Activated CD8-positive, alpha-beta T cell treated with anti-CD3 and anti-CD28 coated beads for 36 hours (primary cell): ENCODE measurements at regions of chr6 and their contacts with region 1.

Region 1: DNA sequence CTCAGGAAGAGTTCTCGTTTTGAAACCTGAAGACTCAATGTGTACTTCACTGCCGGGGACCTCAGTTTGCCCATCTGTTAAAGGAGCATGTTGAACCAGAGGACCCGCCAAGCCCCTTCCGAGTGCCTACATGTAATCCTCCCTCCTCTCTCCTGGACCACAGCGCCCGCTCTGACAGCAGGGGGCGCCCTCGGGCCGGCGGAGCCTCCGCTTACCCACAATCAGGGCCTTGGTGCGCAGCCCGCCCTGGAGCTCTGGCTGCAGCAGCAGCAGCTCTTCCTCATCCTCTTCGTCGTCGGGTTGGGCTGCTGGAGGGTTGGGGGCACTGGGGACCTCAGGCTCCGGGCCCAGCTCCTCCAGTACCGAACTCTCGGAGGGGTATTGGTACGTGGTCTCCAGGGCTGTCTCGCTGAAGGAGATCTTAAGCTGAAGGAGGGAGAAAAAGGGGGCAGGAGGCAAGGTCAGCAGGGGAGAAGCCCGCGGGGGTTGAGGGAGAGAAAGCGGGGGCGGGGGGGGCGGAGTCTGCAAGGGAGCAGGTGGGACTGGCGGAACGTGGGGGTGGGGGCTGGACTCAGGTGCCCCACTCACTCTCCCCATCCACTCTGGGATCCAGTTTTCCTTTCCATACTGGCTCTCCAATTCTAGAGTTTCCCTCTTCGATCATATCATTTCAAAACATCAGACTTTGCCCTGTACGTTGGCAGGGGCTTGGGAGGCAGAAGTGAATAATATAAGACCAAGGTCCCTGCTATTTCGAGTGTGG is 6.3 kb upstream of the DHX16 start:
- DNase-seq: peak; percentile 92
- ATAC-seq: peak; percentile 27
- H3K4me3 Mint-ChIP-seq: peak overlapping the region; percentile 88
- H3K27ac Mint-ChIP-seq: peak overlapping the region; percentile 95
- H3K4me1 Mint-ChIP-seq: peaks cover 11% of the 10 kb centered on the region
- H3K27me3 Mint-ChIP-seq: no peaks in the 10 kb centered on the region
- CTCF ChIP-seq: peak; percentile 97

Region 2: GRCh38 chr6:30700340-30700739 is 21.2 kb after region 1 on chr6:
- CTCF ChIA-PET with region 1: no interaction called
- POLR2A ChIA-PET with region 1: no interaction called
- intact Hi-C with region 1: no loop called
- DNase-seq: no peak
- ATAC-seq: no peak
- H3K4me3 Mint-ChIP-seq: no peak overlapping the region
- H3K27ac Mint-ChIP-seq: no peak overlapping the region
- H3K4me1 Mint-ChIP-seq: no peaks in the 10 kb centered on the region
- H3K27me3 Mint-ChIP-seq: no peaks in the 10 kb centered on the region
- CTCF ChIP-seq: no peak

Region 3: DNA sequence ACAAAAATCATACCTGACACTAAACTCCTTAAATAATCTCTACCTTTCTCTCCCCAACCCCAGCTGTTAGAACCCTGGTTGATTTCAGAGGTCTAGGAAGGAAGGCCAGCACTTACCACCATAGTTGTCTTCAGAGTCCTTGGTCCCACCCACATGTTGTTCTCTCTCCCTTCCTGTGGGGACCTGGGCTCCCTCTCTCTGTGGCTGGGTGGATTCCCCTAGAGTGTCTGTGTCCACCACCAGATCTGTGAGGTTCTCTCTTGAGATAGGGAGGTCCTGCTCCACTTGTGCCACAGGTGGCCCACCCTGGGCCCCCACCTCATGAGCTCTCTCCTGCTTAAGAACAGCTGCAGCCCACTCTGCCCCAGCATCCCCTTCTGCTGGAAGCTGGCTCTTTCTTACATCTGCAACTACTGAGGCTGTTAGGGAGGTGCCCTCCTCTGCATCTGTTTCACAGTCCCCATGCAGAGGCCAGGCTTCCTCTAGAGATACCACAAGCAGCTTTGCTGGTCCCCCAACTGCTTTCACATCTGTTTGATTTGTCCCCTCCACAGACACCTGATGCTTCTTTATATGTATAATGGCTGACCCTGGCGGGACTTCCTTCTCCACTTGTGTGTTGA is 32.7 kb after region 1 on chr6:
- CTCF ChIA-PET with region 1: interaction called, 704 read pairs
- POLR2A ChIA-PET with region 1: interaction called, 500 read pairs
- intact Hi-C with region 1: loop called (anchors 1 kb)
- DNase-seq: no peak
- ATAC-seq: peak; percentile 61
- H3K4me3 Mint-ChIP-seq: no peak overlapping the region
- H3K27ac Mint-ChIP-seq: peak overlapping the region; percentile 75
- H3K4me1 Mint-ChIP-seq: peaks cover 31% of the 10 kb centered on the region
- H3K27me3 Mint-ChIP-seq: no peaks in the 10 kb centered on the region
- CTCF ChIP-seq: no peak